Naive thymus-derived CD4-positive, alpha-beta T cell (primary cell): ENCODE measurements at regions of chr4 and their contacts with region 1.

Region 1: GRCh38 chr4:67632492-67632891 is 68.5 kb downstream of the UBA6 start:
- DNase-seq: no peak
- ATAC-seq: no peak
- H3K4me3 ChIP-seq: no peak overlapping the region
- H3K4me3 Mint-ChIP-seq: peak overlapping the region in 2 of 10 donors; percentile 49 to 93
- H3K27ac ChIP-seq: no peak overlapping the region
- H3K27ac Mint-ChIP-seq: peak overlapping the region in 2 of 9 donors; percentile 56 to 86
- H3K4me1 ChIP-seq: no peaks in the 10 kb centered on the region
- H3K4me1 Mint-ChIP-seq: peaks cover 0 to 20% (median 0%) of the 10 kb centered on the region in 7 donors
- H3K27me3 ChIP-seq: no peaks in the 10 kb centered on the region
- H3K27me3 Mint-ChIP-seq: no peaks in the 10 kb centered on the region

Region 2: GRCh38 chr4:66625480-66625879 is 1007.0 kb before region 1 on chr4:
- CTCF ChIA-PET with region 1: no interaction called
- POLR2A ChIA-PET with region 1: no interaction called
- intact Hi-C with region 1: no loop called
- DNase-seq: no peak
- ATAC-seq: no peak
- H3K4me3 ChIP-seq: no peak overlapping the region
- H3K4me3 Mint-ChIP-seq: no peak overlapping the region
- H3K27ac ChIP-seq: no peak overlapping the region
- H3K27ac Mint-ChIP-seq: no peak overlapping the region
- H3K4me1 ChIP-seq: no peaks in the 10 kb centered on the region
- H3K4me1 Mint-ChIP-seq: no peaks in the 10 kb centered on the region
- H3K27me3 ChIP-seq: no peaks in the 10 kb centered on the region
- H3K27me3 Mint-ChIP-seq: no peaks in the 10 kb centered on the region

Region 3: DNA sequence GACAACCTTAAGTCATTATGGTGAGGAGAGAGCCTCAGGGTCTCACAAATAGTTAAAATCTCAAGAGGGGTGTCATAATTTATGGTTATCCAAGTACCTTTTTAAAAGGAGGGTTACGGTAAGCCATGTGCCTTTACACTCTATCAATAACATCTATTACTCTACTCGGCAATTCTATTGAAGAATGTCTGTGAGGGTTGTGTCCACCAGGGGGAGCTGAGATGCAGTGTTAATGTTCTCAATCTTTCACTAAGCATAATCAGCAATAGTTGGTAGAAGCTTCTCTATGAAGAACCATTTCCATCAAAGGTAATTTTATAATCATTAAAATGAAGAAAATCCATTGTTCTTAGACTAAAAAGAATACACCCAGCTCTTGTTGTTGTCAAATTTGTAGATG is 544.6 kb before region 1 on chr4:
- CTCF ChIA-PET with region 1: no interaction called
- POLR2A ChIA-PET with region 1: no interaction called
- intact Hi-C with region 1: no loop called
- DNase-seq: peak in 6 of 9 donors; percentile 2 to 24 (median 12)
- ATAC-seq: no peak
- H3K4me3 ChIP-seq: no peak overlapping the region
- H3K4me3 Mint-ChIP-seq: no peak overlapping the region
- H3K27ac ChIP-seq: no peak overlapping the region
- H3K27ac Mint-ChIP-seq: no peak overlapping the region
- H3K4me1 ChIP-seq: no peaks in the 10 kb centered on the region
- H3K4me1 Mint-ChIP-seq: no peaks in the 10 kb centered on the region
- H3K27me3 ChIP-seq: no peaks in the 10 kb centered on the region
- H3K27me3 Mint-ChIP-seq: no peaks in the 10 kb centered on the region

Region 4: DNA sequence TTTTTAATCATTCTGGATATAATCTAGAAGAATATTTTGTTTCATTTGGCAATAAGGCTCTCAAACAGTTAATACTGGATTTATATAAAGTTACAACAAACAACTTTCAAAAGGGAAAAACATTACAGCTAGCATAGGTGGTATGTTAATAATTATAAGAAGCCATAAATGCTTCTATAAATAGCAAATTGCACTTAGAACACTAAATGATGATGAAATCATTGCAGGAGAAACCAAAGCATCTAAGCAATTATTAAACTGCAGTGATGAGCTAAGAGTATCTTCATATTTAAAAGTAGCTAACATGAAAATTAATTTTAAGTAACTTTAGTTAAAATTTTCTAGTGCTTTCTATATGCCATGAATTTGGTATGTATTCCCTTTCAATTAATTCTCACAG is 276.7 kb before region 1 on chr4:
- CTCF ChIA-PET with region 1: no interaction called
- POLR2A ChIA-PET with region 1: no interaction called
- intact Hi-C with region 1: no loop called
- DNase-seq: no peak
- ATAC-seq: no peak
- H3K4me3 ChIP-seq: no peak overlapping the region
- H3K4me3 Mint-ChIP-seq: no peak overlapping the region
- H3K27ac ChIP-seq: no peak overlapping the region
- H3K27ac Mint-ChIP-seq: no peak overlapping the region
- H3K4me1 ChIP-seq: no peaks in the 10 kb centered on the region
- H3K4me1 Mint-ChIP-seq: no peaks in the 10 kb centered on the region
- H3K27me3 ChIP-seq: no peaks in the 10 kb centered on the region
- H3K27me3 Mint-ChIP-seq: peaks cover 0 to 15% (median 0%) of the 10 kb centered on the region in 5 donors

Region 5: DNA sequence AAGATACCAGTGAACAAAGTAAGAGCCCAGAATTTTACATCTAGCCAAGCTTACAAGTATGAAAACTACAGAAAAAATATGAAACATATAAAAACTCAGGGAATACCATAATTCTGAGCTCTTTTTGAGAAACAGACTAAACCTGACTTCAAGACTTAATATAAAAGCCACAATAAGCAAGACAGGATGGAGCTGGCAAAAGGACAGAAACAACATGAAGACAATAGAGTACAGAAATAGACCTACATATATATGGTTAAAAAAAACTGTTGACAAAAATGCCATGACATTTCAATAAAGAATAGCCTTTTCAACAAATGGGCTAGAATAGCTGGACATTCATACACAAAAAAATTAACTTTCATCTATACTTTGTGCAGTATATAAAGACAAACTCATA is 19.0 kb after region 1 on chr4:
- CTCF ChIA-PET with region 1: interaction called, 4 read pairs
- POLR2A ChIA-PET with region 1: no interaction called
- intact Hi-C with region 1: loop called in 1 of 2 experiments (anchors 2 kb)
- DNase-seq: no peak
- ATAC-seq: no peak
- H3K4me3 ChIP-seq: no peak overlapping the region
- H3K4me3 Mint-ChIP-seq: no peak overlapping the region
- H3K27ac ChIP-seq: no peak overlapping the region
- H3K27ac Mint-ChIP-seq: no peak overlapping the region
- H3K4me1 ChIP-seq: no peaks in the 10 kb centered on the region
- H3K4me1 Mint-ChIP-seq: peaks cover 0 to 11% (median 0%) of the 10 kb centered on the region in 7 donors
- H3K27me3 ChIP-seq: no peaks in the 10 kb centered on the region
- H3K27me3 Mint-ChIP-seq: no peaks in the 10 kb centered on the region